ENCODE measurements at regions of chr16 and their contacts with region 1.

Region 1: GRCh38 chr16:79053577-79053976 is 547.0 kb downstream of the MAF start:
- DNase-seq: no peak
- H3K4me3 Mint-ChIP-seq: no peak overlapping the region
- H3K27ac Mint-ChIP-seq: no peak overlapping the region
- H3K4me1 Mint-ChIP-seq: peaks cover 6% of the 10 kb centered on the region
- H3K27me3 Mint-ChIP-seq: no peaks in the 10 kb centered on the region
- CTCF ChIP-seq: no peak

Region 2: DNA sequence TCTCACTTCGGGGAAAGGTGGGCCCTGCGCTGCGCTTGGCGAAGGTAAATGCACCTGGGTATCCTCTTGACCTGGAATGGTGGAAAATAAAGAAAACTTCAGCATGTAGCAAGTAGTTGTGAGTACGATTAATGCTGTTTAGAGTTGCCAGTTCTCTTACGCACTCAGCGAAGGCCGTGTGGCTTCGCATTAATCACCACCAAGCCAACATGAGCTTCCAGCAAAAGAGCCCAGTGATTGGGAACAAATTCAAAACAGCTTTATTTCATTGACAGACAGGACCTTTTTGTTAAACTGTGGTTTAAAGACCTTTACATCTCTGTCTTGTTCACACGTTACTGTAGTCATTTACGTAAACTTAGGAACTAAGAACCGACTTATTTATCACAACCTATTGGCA is 15.5 kb after region 1 on chr16:
- CTCF ChIA-PET with region 1: interaction called, 3 read pairs
- POLR2A ChIA-PET with region 1: interaction called, 10 read pairs
- intact Hi-C with region 1: no loop called
- DNase-seq: no peak
- H3K4me3 Mint-ChIP-seq: no peak overlapping the region
- H3K27ac Mint-ChIP-seq: no peak overlapping the region
- H3K4me1 Mint-ChIP-seq: peaks cover 40% of the 10 kb centered on the region
- H3K27me3 Mint-ChIP-seq: no peaks in the 10 kb centered on the region
- CTCF ChIP-seq: no peak

Measured in MCF 10A (cell line).